Activated CD4-positive, alpha-beta T cell treated with anti-CD3 and anti-CD28 coated beads for 36 hours (primary cell): ENCODE measurements at regions of chr3 and their contacts with region 1.

Region 1: GRCh38 chr3:52685709-52686691 is at the starts of genes GNL3 and PBRM1:
- DNase-seq: peak; percentile 97
- ATAC-seq: peak; percentile 70
- H3K4me3 Mint-ChIP-seq: peak within 1 kb of the TSS; percentile 99
- H3K27ac Mint-ChIP-seq: peak within 1 kb of the TSS; percentile 99
- H3K4me1 Mint-ChIP-seq: peaks cover 75% of the 10 kb centered on the region
- H3K27me3 Mint-ChIP-seq: no peaks in the 10 kb centered on the region
- total RNA-seq, gene GNL3: 206 to 218 TPM
- total RNA-seq, gene PBRM1: 57.6 to 59.8 TPM

Region 2: DNA sequence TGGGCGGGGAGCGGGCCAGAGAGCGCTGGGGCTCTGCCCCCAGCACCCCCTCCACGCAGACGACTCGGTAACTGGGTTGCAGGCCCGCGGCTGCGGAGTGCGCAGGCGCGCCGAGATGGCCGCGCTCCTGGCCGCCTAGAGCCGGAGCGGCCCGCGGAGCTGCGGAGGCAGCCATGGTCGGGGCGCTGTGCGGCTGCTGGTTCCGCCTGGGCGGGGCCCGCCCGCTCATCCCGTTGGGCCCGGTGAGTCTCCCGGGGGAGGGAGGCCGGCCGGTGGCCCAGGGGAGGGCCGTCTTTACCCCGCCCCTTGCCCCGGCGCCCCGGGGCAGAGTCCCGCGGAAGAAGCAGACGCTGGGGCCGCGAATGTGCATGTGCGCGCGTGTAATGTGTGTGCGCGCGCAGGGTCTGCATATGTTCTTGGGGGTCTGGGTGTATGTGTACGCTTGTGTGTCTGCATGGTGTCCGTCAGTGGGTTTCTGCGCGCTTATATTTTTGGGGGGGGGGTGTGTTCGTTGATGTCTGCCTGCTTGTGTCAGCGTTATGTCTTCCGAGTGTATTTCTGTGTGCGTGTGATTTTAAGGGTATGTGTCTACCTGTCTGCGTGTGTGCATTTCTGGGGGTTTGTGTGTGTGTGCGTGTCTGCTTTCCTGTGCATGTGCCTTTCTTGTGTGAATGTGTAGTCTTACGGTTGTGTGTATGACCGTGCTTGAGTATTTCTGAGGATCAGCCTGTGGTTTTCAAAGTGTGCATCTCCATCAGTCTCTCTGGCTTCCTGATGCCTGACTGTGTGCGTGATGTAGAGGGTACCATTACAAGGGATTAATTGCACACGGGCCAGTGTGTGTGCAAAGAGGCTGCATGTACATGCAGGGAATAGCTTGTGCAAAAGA is 710.8 kb before region 1 on chr3 and contains the start of gene ABHD14A:
- CTCF ChIA-PET with region 1: no interaction called
- POLR2A ChIA-PET with region 1: no interaction called
- intact Hi-C with region 1: loop called in 1 of 2 experiments (anchors 10 kb)
- DNase-seq: peak; percentile 81
- ATAC-seq: peak; percentile 70
- H3K4me3 Mint-ChIP-seq: peak within 1 kb of the TSS; percentile 97
- H3K27ac Mint-ChIP-seq: peak within 1 kb of the TSS; percentile 97
- H3K4me1 Mint-ChIP-seq: peaks cover 34% of the 10 kb centered on the region
- H3K27me3 Mint-ChIP-seq: no peaks in the 10 kb centered on the region
- total RNA-seq, gene ABHD14A: 6.3 to 7.5 TPM

Region 3: GRCh38 chr3:52536369-52537164 is 149.4 kb before region 1 on chr3 and contains the start of gene UQCC5:
- CTCF ChIA-PET with region 1: no interaction called
- POLR2A ChIA-PET with region 1: interaction called, 4 read pairs
- intact Hi-C with region 1: loop called (anchors 1 to 2 kb)
- DNase-seq: peak; percentile 99
- ATAC-seq: peak; percentile 91
- H3K4me3 Mint-ChIP-seq: peak within 1 kb of the TSS; percentile 100
- H3K27ac Mint-ChIP-seq: peak within 1 kb of the TSS; percentile 99
- H3K4me1 Mint-ChIP-seq: peaks cover 49% of the 10 kb centered on the region
- H3K27me3 Mint-ChIP-seq: no peaks in the 10 kb centered on the region
- total RNA-seq, gene UQCC5: 12.0 to 12.7 TPM

Region 4: GRCh38 chr3:52705688-52706686 is 20.0 kb after region 1 on chr3 and contains the starts of genes GLT8D1 and SPCS1:
- CTCF ChIA-PET with region 1: interaction called, 4 read pairs
- POLR2A ChIA-PET with region 1: interaction called, 16 read pairs
- intact Hi-C with region 1: loop called (anchors 1 kb)
- DNase-seq: peak; percentile 92
- ATAC-seq: peak; percentile 94
- H3K4me3 Mint-ChIP-seq: peak within 1 kb of the TSS; percentile 89
- H3K27ac Mint-ChIP-seq: peak within 1 kb of the TSS; percentile 90
- H3K4me1 Mint-ChIP-seq: peaks cover 28% of the 10 kb centered on the region
- H3K27me3 Mint-ChIP-seq: no peaks in the 10 kb centered on the region
- total RNA-seq, gene GLT8D1: 35.2 to 38.0 TPM
- total RNA-seq, gene SPCS1: 111 to 120 TPM

Region 5: GRCh38 chr3:53881691-53882593 is 1195.9 kb after region 1 on chr3 and contains the start of gene ACTR8:
- CTCF ChIA-PET with region 1: no interaction called
- POLR2A ChIA-PET with region 1: no interaction called
- intact Hi-C with region 1: loop called in 1 of 2 experiments (anchors 10 kb)
- DNase-seq: peak; percentile 90
- ATAC-seq: peak; percentile 92
- H3K4me3 Mint-ChIP-seq: peak within 1 kb of the TSS; percentile 100
- H3K27ac Mint-ChIP-seq: peak within 1 kb of the TSS; percentile 99
- H3K4me1 Mint-ChIP-seq: peaks cover 20% of the 10 kb centered on the region
- H3K27me3 Mint-ChIP-seq: no peaks in the 10 kb centered on the region
- total RNA-seq, gene ACTR8: 26.0 to 28.9 TPM